KBM-7 (cell line): ENCODE measurements at regions of chr11 and their contacts with region 1.

Region 1: GRCh38 chr11:6027501-6027900 is 3.1 kb downstream of the OR56A1 start:
- DNase-seq: no peak

Region 2: GRCh38 chr11:6333112-6333511 is 305.6 kb after region 1 on chr11:
- in situ Hi-C with region 1: loop called (anchors 25 kb)
- DNase-seq: no peak

Region 3: DNA sequence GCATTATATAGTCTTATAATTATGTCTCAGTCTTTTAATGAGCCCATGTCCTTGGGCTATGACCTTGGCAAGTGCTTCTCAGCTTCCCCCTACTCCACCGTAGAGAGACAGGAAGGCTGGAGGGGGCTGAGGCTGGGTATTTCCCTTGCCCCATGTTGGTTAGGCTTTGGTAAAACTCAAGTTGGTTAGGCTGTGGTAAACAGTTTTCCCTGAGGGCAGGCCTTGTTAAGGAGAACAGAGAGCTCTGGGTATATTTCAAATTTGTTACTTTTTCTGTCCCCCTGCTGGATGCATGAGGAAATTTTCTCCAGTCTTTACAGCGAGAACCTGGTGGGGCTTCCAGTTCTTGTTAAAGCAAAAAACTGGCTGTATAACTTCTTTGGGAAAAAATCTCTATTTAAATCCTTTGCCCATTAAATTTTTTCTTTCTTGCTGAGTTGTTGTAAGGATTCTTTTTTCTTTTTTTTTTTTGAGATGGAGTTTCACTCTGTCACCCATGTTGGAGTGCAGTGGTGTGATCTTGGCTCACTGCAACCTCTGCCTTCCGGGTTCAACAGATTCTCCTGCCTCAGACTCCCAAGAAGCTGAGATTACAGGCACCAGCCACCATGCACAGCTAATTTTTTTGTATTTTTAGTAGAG is 640.4 kb after region 1 on chr11:
- in situ Hi-C with region 1: no loop called
- DNase-seq: peak; percentile 66